ENCODE measurements at regions of chr2 and their contacts with region 1.

Region 1: DNA sequence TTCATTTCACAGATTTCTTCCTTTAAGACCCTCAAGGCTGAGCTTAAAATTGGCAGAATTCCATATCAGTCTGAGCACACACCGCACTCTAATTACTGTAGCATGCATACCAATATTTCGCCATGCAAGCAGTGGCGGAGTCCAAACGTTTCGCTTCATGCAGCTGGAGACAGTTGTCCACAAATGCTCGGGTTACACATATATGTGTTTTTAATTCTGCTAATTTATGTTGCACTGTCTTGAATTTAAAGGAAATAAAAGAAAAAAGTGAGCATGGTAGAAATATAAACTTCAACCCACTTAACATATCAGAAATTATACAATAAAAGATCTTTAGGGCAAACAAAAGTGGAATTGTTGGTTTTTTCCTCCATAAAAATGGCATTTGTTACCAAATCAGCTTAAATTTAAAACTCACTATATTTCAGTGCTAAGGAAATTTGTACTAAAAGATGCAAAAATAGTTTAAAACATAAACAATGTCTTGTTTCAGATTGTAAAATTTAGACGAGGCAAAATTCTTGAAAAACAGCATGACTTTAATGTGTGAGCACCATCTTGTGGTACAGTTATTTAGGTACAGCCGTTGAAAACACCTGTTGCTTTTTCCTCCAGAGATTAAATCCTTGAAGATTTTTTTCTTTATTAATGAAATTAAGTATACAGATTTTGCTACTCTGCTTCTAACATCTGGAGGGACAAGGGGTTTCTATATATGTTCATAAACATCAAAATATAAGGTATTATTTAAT is 24.1 kb upstream of the KANSL1L start:
- DNase-seq: no peak
- ATAC-seq: peak; percentile 49 to 50
- H3K4me3 ChIP-seq: peak overlapping the region; percentile 24 to 53 (median 49)
- H3K27ac ChIP-seq: no peak overlapping the region
- H3K4me1 ChIP-seq: peaks cover 4 to 7% of the 10 kb centered on the region in 2 donors
- H3K27me3 ChIP-seq: no peaks in the 10 kb centered on the region
- CTCF ChIP-seq: peak in 4 of 5 experiments; percentile 62 to 80 (median 71)
- POLR2A ChIP-seq: no peak

Region 2: GRCh38 chr2:209977386-209978239 is 217.7 kb before region 1 on chr2:
- in situ Hi-C with region 1: loop called (anchors 5 kb)
- intact Hi-C with region 1: loop called (anchors 1 kb)
- DNase-seq: no peak
- ATAC-seq: no peak
- H3K4me3 ChIP-seq: no peak overlapping the region
- H3K27ac ChIP-seq: no peak overlapping the region
- H3K4me1 ChIP-seq: no peaks in the 10 kb centered on the region
- H3K27me3 ChIP-seq: no peaks in the 10 kb centered on the region
- CTCF ChIP-seq: peak; percentile 47 to 92 (median 63)
- POLR2A ChIP-seq: no peak